ENCODE measurements at regions of chr17 and their contacts with region 1.

Region 1: DNA sequence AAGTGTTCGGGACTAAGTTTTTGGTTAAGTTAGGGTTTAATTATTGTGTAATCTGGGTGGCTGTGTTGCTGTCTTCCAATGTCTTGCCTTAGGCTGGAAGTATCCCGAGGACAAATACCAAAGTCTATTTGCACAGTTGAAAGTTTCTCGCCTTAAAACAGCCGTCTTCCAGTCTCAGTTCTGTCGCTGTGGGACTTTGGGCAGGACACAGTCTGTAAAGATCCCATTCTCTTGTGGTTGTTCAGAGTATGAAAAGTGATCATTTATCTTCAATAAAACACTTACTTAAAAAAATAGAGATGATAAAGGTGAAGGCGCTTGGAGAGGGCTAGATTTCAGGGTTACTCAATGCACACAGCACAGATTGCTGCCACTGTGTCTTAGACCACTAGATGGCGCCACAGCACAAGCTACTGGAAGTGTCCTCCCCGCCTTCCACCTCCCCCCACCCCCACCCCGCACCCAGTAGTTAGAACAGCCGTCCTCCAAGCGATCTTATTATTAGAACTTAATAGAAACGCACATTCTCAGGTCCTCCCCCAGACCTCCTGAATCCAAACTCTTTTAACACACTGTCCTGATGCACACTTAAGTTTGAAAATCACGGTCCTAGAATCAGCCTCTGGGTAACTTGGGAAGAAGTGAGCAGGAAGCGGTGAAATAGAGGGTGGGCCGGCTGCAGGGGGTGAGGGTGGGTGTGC is 45.9 kb downstream of the AKAP1 start:
- DNase-seq: peak; percentile 77
- H3K4me3 ChIP-seq: peak overlapping the region; percentile 29
- H3K27ac ChIP-seq: no peak overlapping the region
- H3K27me3 ChIP-seq: no peaks in the 10 kb centered on the region
- CTCF ChIP-seq: peak; percentile 81

Region 2: DNA sequence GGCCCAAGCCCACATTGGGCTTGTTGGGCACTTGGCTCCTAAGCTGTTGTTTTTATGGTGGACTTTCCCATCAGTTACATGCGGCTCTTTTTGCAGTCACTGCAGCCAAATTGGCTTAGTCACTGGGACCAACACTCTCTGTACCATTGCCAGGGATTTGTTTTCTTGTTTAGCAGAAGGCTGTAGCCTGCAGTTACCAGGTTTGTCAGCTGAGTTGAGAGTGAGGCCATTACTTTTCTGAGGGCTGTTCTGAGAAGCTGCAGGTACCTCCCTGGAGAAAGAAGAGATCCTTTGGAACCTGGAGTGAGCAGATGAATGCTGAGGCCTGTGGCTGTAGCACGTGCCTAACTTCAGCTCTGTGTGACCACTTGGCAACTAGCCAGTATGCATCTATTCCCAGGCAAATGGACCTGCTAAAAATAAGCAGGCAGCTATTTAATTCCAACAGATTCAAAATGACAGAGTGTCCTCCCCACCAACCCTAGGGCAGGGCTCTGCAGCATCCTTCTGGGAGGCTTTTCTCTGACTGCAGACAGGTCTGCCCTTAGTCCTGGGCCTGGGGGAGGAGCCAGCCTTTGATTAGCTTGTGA is 33.0 kb before region 1 on chr17:
- in situ Hi-C with region 1: no loop called
- DNase-seq: peak; percentile 63
- H3K4me3 ChIP-seq: no peak overlapping the region
- H3K27ac ChIP-seq: no peak overlapping the region
- H3K27me3 ChIP-seq: no peaks in the 10 kb centered on the region
- CTCF ChIP-seq: no peak

Region 3: DNA sequence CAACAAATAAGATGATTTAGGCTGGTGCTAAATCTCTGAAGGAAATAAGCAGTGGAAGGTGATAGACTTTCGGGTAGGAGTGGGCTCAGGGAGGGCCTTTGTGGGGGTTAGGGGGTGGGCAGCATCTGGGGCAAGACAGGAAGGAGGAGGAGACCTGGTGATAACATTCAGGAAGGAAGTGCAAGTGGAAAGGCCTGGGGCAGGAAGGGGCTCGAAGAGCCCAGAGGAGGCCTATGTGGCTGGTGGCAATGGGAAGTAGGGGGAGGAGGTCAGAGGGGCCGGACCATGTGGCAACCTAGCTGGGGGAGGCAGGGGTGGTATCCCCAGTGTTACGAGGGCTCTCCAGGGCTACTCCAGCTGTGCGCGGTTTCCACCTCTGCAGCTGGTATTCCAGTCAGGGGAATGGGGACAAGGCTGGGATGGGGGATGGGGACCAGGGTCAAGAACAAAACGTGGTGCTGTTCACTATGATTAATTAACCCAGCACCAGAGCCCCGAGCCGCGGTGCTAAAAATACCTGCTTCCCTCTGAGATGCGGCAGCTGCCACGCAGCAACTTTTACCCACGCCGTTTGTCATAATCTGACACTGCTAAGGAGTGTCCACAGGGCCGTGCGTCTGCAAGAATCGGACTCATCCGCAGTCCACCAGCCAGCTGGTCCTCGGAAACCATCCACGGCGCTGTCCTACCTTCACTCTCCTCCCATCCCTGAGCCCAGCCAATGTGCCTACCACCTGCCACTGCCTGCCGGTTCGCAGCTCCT is 619.4 kb after region 1 on chr17:
- in situ Hi-C with region 1: loop called (anchors 25 kb)
- DNase-seq: no peak
- H3K4me3 ChIP-seq: no peak overlapping the region
- H3K27ac ChIP-seq: no peak overlapping the region
- H3K27me3 ChIP-seq: peaks cover 2% of the 10 kb centered on the region
- CTCF ChIP-seq: no peak

Measured in brain microvascular endothelial cell (primary cell).